ENCODE measurements at regions of chr5 and their contacts with region 1.

Region 1: GRCh38 chr5:159209438-159210305 is at the start of gene RNF145:
- H3K4me3 Mint-ChIP-seq: peak within 1 kb of the TSS; percentile 99
- H3K27ac Mint-ChIP-seq: peak within 1 kb of the TSS; percentile 100
- H3K4me1 Mint-ChIP-seq: peaks cover 69% of the 10 kb centered on the region
- H3K27me3 Mint-ChIP-seq: no peaks in the 10 kb centered on the region

Region 2: GRCh38 chr5:158450721-158451120 is 759.0 kb before region 1 on chr5:
- intact Hi-C with region 1: no loop called
- H3K4me3 Mint-ChIP-seq: no peak overlapping the region
- H3K27ac Mint-ChIP-seq: no peak overlapping the region
- H3K4me1 Mint-ChIP-seq: no peaks in the 10 kb centered on the region
- H3K27me3 Mint-ChIP-seq: no peaks in the 10 kb centered on the region

Region 3: GRCh38 chr5:159178978-159179377 is 30.7 kb before region 1 on chr5:
- intact Hi-C with region 1: loop called (anchors 2 kb)
- H3K4me3 Mint-ChIP-seq: no peak overlapping the region
- H3K27ac Mint-ChIP-seq: peak overlapping the region; percentile 84
- H3K4me1 Mint-ChIP-seq: peaks cover 19% of the 10 kb centered on the region
- H3K27me3 Mint-ChIP-seq: no peaks in the 10 kb centered on the region

Region 4: GRCh38 chr5:159252195-159252594 is 42.5 kb after region 1 on chr5:
- intact Hi-C with region 1: no loop called
- H3K4me3 Mint-ChIP-seq: no peak overlapping the region
- H3K27ac Mint-ChIP-seq: no peak overlapping the region
- H3K4me1 Mint-ChIP-seq: no peaks in the 10 kb centered on the region
- H3K27me3 Mint-ChIP-seq: no peaks in the 10 kb centered on the region